ENCODE measurements at regions of chr6 and their contacts with region 1.

Region 1: GRCh38 chr6:49980898-49981297 is 11.5 kb upstream of the DEFB113 start:
- DNase-seq: no peak

Region 2: GRCh38 chr6:49939993-49940498 is 40.9 kb before region 1 on chr6:
- intact Hi-C with region 1: no loop called
- DNase-seq: no peak

Region 3: DNA sequence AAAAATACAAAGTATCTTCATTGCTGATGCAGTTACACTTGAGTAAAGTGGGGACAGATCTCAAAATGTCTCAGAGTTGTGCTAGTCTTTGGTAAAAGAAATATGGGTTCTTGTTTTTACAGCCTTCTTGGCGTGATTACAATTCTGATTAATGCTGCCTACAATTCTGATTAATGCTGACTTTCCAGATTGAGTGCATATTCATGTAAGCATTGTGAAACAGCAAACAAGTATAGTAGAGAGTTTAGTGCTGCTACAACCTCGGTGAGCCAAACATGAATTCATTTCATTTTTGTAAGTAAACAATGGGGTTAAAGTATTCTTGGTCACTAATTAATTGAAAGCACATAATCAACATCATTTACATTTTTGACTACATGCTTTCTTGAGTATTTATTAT is 11.3 kb before region 1 on chr6 and contains the start of gene DEFB113:
- intact Hi-C with region 1: loop called in 1 of 2 experiments (anchors 2 kb)
- DNase-seq: no peak
- total RNA-seq, gene DEFB113: not detected

Measured in posterior vena cava (tissue), 2 donors.